Posterior cingulate gyrus (tissue), 11 donors: ENCODE measurements at regions of chr11 and their contacts with region 1.

Region 1: GRCh38 chr11:65593518-65594298 is 1.9 kb downstream of the KCNK7 start:
- DNase-seq: peak in 8 of 10 donors; percentile 69 to 95 (median 75)

Region 2: DNA sequence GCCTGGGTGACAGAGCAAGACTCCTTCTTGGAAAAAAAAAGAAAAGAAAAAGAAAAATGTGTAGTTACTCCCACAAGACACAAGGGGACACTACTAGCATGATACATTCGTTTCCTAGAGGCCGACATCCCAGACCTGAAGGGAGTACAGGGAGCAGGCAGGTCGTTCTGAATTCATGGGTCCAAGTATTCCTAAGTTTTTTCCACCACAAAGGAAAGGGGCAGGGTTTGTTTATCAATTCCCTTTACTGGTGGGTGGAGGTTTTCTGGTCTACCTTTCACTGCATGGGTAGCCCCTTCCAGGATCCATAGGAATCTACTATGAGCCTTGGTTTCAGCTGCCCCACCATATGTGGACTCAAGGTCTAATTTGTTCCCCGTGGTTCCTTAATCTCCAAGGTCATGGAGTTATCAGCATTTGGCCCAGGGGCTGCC is 227.4 kb before region 1 on chr11:
- intact Hi-C with region 1: loop called (anchors 10 kb)
- DNase-seq: peak in 1 of 10 donors; percentile 27

Region 3: DNA sequence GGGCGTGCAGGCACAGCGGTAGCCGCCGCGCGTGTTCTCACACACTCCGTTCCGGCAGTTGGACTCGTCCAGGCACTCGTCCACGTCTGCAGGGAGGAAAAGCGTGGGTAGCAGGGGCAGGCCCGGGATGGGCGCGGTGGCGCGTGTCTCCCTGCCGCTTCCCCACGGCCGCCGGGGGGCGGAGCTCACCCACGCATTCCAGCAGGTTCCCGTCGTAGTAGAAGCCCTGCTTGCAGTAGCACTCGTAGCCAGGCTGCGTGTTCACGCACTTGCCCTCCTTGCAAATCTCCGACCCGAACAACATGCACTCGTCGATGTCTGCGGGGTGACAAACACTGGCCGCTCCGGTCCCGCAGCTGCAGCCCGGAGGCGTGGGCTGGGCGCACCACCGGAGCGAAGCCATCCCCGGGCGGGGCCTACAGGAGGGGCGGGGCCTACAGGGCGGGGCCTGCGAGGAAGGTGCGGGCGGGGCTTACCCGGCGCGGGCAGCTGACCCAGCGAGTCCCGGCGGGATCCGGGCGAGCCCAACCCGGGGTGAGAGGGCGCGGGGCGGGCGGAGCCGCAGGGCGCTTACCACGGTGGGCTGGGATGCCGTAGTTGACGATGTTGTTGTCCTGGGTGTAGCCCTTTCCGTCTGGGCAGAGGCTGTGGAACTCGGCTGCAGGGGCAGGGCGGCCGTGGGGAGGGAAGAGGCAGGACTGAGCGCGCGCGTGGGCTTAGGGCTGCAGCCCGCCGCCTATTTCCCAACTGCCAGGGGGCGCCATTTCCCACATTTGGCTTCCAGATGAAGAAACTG is 53.2 kb before region 1 on chr11:
- intact Hi-C with region 1: loop called (anchors 1 kb)
- DNase-seq: peak; percentile 82 to 99 (median 90)

Region 4: GRCh38 chr11:65919146-65920033 is 325.7 kb after region 1 on chr11 and contains the start of gene DRAP1:
- intact Hi-C with region 1: no loop called
- DNase-seq: peak; percentile 98 to 100 (median 100)